ENCODE measurements at regions of chr17 and their contacts with region 1.

Region 1: GRCh38 chr17:46841561-46842379 is 9.6 kb upstream of the WNT9B start:
- DNase-seq: peak in 1 of 2 experiments; percentile 92
- H3K4me3 ChIP-seq: peak overlapping the region; percentile 10 to 48 (median 40); a peak in 7 of 8 replicates
- H3K27ac ChIP-seq: no peak overlapping the region
- H3K4me1 ChIP-seq: no peaks in the 10 kb centered on the region; a peak in 1 of 7 replicates
- H3K27me3 ChIP-seq: peaks cover 3 to 12% (median 11%) of the 10 kb centered on the region in 4 experiments
- CTCF ChIP-seq: peak; percentile 85 to 96 (median 90)
- EP300 ChIP-seq: 0 out of 3 replicates have a peak, but pooled peaks of 1 of the 2 experiments have one; percentile 26
- POLR2A ChIP-seq: no peak
- RAD21 ChIP-seq: peak; percentile 77 to 87

Region 2: DNA sequence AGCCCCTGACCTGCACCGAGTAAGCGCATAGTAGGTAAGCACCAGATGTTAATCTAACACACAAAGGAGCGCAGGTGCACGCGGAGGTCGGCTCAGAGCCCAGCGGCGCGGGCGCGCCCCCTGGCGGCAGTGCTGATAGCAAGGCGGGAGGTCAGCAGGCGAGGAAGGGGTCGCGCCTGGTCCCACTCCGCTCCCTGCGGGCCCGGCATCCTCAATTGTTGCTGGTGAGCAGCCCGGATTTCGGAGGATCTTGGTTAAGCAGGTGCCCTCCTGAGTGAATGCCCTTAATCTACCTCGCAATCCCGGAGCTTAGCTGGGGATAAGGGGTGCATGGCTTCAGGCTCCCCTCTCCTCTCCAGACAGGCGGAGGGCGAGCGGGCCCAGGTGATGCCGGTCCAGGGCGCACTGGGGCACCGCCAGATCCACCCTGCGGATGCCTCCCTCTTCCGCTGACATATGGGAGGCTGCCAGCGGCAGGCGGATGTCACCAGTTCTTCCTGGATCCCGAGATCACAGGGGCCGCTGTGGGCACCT is 19.3 kb before region 1 on chr17:
- CTCF ChIA-PET with region 1: interaction called, 49 read pairs
- POLR2A ChIA-PET with region 1: no interaction called
- DNase-seq: peak in 1 of 2 experiments; percentile 95
- H3K4me3 ChIP-seq: no peak overlapping the region
- H3K27ac ChIP-seq: no peak overlapping the region
- H3K4me1 ChIP-seq: peaks cover 0 to 28% (median 24%) of the 10 kb centered on the region in 4 experiments; a peak in 6 of 7 replicates
- H3K27me3 ChIP-seq: peaks cover 26 to 58% (median 48%) of the 10 kb centered on the region in 4 experiments
- CTCF ChIP-seq: peak; percentile 78 to 93 (median 86)
- EP300 ChIP-seq: no peak
- POLR2A ChIP-seq: no peak
- RAD21 ChIP-seq: peak; percentile 61 to 65

Region 3: DNA sequence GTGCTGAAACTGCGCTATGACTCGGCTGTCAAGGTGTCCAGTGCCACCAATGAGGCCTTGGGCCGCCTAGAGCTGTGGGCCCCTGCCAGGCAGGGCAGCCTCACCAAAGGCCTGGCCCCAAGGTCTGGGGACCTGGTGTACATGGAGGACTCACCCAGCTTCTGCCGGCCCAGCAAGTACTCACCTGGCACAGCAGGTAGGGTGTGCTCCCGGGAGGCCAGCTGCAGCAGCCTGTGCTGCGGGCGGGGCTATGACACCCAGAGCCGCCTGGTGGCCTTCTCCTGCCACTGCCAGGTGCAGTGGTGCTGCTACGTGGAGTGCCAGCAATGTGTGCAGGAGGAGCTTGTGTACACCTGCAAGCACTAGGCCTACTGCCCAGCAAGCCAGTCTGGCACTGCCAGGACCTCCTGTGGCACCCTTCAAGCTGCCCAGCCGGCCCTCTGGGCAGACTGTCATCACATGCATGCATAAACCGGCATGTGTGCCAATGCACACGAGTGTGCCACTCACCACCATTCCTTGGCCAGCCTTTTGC is 34.6 kb after region 1 on chr17:
- CTCF ChIA-PET with region 1: interaction called, 40 read pairs
- POLR2A ChIA-PET with region 1: no interaction called
- DNase-seq: peak in 1 of 2 experiments; percentile 74
- H3K4me3 ChIP-seq: no peak overlapping the region
- H3K27ac ChIP-seq: no peak overlapping the region
- H3K4me1 ChIP-seq: no peaks in the 10 kb centered on the region
- H3K27me3 ChIP-seq: no peaks in the 10 kb centered on the region; a peak in 2 of 7 replicates
- CTCF ChIP-seq: peak; percentile 73 to 79 (median 74)
- EP300 ChIP-seq: no peak
- POLR2A ChIP-seq: no peak
- RAD21 ChIP-seq: peak; percentile 54 to 68; a peak in 3 of 4 replicates

Region 4: DNA sequence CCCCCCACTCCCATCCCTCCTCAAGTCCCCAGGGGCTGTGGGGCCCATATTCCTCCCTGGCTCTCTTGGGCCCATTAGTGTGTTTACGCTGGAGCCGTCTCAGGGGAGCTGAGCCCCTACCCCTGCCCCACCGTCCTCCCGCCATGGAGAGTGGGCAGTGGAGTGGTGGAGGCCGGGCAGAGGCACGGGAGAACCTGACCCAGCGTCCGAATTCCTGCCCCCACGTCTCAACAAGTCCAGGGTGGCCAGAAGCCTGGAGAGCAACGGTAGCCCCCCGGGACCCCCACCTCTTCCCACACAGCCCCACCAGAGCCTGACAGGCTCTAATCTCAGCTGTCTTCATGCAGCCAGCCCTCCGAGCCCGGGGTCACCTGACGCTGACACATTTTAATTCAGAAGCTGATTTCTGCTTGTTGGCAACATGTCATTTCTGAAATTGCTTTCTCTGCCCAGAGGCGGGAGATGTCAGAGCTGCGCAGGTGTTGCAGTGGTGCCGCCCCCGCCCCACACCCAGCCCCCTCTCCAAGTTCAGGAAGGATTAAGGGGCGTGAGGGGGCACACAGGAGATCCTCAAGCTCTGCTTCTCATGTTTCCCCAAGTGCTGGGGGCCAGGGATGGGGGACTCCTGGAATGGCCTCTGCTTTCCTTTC is 42.2 kb after region 1 on chr17:
- CTCF ChIA-PET with region 1: interaction called, 18 read pairs
- POLR2A ChIA-PET with region 1: no interaction called
- DNase-seq: no peak
- H3K4me3 ChIP-seq: no peak overlapping the region
- H3K27ac ChIP-seq: no peak overlapping the region
- H3K4me1 ChIP-seq: no peaks in the 10 kb centered on the region
- H3K27me3 ChIP-seq: no peaks in the 10 kb centered on the region
- CTCF ChIP-seq: no peak
- EP300 ChIP-seq: no peak
- POLR2A ChIP-seq: no peak
- RAD21 ChIP-seq: no peak

Region 5: GRCh38 chr17:46894476-46895151 is 52.8 kb after region 1 on chr17:
- CTCF ChIA-PET with region 1: interaction called, 18 read pairs
- POLR2A ChIA-PET with region 1: no interaction called
- DNase-seq: peak in 1 of 2 experiments; percentile 54
- H3K4me3 ChIP-seq: no peak overlapping the region
- H3K27ac ChIP-seq: no peak overlapping the region
- H3K4me1 ChIP-seq: peaks cover 0 to 8% (median 0%) of the 10 kb centered on the region in 4 experiments; a peak in 3 of 7 replicates
- H3K27me3 ChIP-seq: no peaks in the 10 kb centered on the region
- CTCF ChIP-seq: no peak
- EP300 ChIP-seq: no peak
- POLR2A ChIP-seq: no peak
- RAD21 ChIP-seq: no peak

Region 6: GRCh38 chr17:46922804-46923635 is 81.2 kb after region 1 on chr17 and contains the start of gene GOSR2:
- CTCF ChIA-PET with region 1: interaction called, 11 read pairs
- POLR2A ChIA-PET with region 1: no interaction called
- DNase-seq: peak; percentile 73 to 95
- H3K4me3 ChIP-seq: peak within 1 kb of the TSS; percentile 92 to 99 (median 96)
- H3K27ac ChIP-seq: peak within 1 kb of the TSS; percentile 99
- H3K4me1 ChIP-seq: peaks cover 0 to 2% (median 0%) of the 10 kb centered on the region in 4 experiments; a peak in 2 of 7 replicates
- H3K27me3 ChIP-seq: no peaks in the 10 kb centered on the region
- CTCF ChIP-seq: no peak
- EP300 ChIP-seq: no peak
- POLR2A ChIP-seq: peak; percentile 92 to 96
- RAD21 ChIP-seq: 0 out of 4 replicates have a peak, but pooled peaks of 1 of the 2 experiments have one; percentile 11
- total RNA-seq, gene GOSR2: 31.7 and 36.2 TPM in 2 replicates

Region 7: DNA sequence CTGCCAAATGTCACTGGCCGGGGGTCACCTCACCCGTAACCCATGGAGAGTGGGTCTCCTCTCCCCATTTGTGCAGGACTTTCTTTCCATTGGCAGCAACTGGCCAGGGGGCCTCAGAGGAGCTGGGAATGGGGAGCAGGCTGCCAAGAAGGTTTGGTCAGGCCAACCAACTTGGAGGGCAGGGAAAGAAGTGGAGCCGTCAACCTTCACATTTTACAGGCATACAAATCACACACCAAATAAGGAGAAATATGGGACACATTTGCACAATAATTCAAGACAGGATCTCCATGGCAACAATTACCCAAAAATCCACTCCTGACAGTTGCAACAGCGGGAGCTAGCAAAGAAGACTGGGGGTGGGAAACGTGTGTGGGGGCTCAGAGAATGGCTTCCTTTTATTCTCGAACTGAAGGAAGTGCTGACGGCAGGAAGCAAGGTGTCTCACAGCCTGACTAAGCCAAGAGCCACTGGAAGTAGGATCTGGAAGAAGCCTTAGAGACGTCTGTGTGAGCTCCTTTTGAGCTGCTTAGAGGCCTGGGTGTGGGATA is 116.3 kb after region 1 on chr17:
- CTCF ChIA-PET with region 1: no interaction called
- POLR2A ChIA-PET with region 1: no interaction called
- DNase-seq: no peak
- H3K4me3 ChIP-seq: no peak overlapping the region
- H3K27ac ChIP-seq: no peak overlapping the region
- H3K4me1 ChIP-seq: no peaks in the 10 kb centered on the region
- H3K27me3 ChIP-seq: peaks cover 0 to 2% (median 0%) of the 10 kb centered on the region in 4 experiments; a peak in 1 of 7 replicates
- CTCF ChIP-seq: no peak
- EP300 ChIP-seq: no peak
- POLR2A ChIP-seq: no peak
- RAD21 ChIP-seq: no peak

Region 8: GRCh38 chr17:46995841-46996571 is 154.2 kb after region 1 on chr17:
- CTCF ChIA-PET with region 1: interaction called, 10 read pairs
- POLR2A ChIA-PET with region 1: no interaction called
- DNase-seq: no peak
- H3K4me3 ChIP-seq: no peak overlapping the region
- H3K27ac ChIP-seq: no peak overlapping the region
- H3K4me1 ChIP-seq: no peaks in the 10 kb centered on the region
- H3K27me3 ChIP-seq: no peaks in the 10 kb centered on the region
- CTCF ChIP-seq: no peak
- EP300 ChIP-seq: no peak
- POLR2A ChIP-seq: no peak
- RAD21 ChIP-seq: no peak